PC-9 (cell line): ENCODE measurements at regions of chr6 and their contacts with region 1.

Region 1: DNA sequence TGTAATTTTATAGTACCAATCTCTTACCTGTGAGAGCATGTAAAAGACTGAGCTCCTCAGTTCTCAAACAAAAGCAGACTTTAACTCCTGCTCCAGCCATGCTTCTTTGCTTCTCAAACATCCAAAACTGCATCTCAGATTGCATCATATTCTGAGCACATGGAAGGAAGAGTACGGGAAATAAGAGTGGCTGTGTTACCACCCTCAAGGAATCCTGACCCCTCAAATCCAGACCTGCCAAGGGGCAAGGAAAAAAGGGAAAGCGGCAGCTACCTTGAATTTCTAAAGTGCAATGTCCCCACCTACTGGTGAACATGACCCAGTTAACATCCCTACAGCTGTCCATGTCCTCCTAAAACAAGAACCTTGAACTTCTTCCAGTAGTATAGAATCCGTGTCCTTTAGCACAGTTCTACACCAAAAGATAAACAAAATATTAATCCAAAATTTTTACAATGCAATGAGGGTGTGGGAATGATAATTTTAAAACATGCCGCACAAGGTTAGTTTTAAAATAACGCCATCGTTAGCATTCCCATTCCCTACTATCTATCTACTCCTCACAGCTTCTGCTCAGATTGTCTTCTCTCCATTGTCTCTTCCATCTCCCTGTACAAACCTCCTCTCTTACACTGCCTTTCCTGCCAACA is 34.1 kb upstream of the HLA-DQB1 start:
- DNase-seq: peak; percentile 32 to 50
- H3K4me3 ChIP-seq: no peak overlapping the region
- H3K27ac ChIP-seq: no peak overlapping the region
- H3K4me1 ChIP-seq: no peaks in the 10 kb centered on the region
- H3K27me3 ChIP-seq: 0 out of 2 replicates have a peak, but pooled peaks cover 8% of the 10 kb centered on the region
- CTCF ChIP-seq: peak; percentile 70

Region 2: DNA sequence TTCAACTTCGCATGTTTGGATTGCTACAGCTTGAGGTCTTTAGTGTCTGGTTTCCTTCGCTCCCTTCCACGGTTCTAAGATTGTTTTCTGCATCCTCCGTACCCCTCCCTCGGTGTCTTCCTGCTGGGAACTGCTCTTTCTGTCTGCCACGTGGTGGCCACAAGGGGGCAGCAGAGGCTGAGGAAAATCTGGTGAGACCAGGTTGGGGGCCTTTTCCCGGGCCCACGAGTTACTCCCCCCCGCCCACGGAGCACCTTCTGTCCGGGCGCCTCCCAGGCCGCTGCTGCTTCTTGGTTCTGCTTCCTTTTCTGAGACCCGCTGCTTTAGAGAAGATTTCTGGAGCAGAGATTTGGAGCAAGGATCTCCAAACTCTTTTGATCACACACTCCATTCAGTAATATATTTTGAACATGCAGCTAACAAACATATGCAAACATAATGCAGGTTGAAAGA is 455.5 kb before region 1 on chr6:
- CTCF ChIA-PET with region 1: no interaction called
- POLR2A ChIA-PET with region 1: no interaction called
- intact Hi-C with region 1: loop called (anchors 2 kb)
- DNase-seq: peak in 1 of 2 experiments; percentile 71
- H3K4me3 ChIP-seq: no peak overlapping the region
- H3K27ac ChIP-seq: no peak overlapping the region
- H3K4me1 ChIP-seq: no peaks in the 10 kb centered on the region
- H3K27me3 ChIP-seq: peaks cover 23% of the 10 kb centered on the region
- CTCF ChIP-seq: peak; percentile 95

Region 3: GRCh38 chr6:32413427-32414047 is 287.0 kb before region 1 on chr6:
- CTCF ChIA-PET with region 1: no interaction called
- POLR2A ChIA-PET with region 1: no interaction called
- intact Hi-C with region 1: loop called (anchors 2 kb)
- DNase-seq: peak; percentile 38 to 75
- H3K4me3 ChIP-seq: no peak overlapping the region
- H3K27ac ChIP-seq: no peak overlapping the region
- H3K4me1 ChIP-seq: no peaks in the 10 kb centered on the region
- H3K27me3 ChIP-seq: peaks cover 44% of the 10 kb centered on the region
- CTCF ChIP-seq: peak; percentile 88

Region 4: DNA sequence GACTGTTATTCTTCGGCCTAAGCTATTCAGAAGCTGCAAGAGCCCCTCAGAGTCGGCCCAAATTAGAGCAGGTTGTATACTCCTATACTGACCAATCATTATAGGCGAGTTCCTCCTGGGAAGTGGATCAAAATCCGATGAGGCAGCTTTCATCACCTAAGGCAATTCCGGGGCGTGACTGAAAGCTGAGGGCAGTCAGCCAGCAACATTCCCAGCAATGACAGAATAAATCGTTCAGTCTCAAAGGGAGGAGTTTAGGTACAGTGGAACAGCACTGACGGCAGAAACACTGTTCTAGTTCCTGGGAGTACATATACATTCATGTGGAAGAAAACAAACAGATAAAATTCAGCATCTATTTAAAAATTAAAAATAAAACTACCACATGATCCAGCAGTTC is 52.1 kb after region 1 on chr6:
- CTCF ChIA-PET with region 1: no interaction called
- POLR2A ChIA-PET with region 1: no interaction called
- intact Hi-C with region 1: no loop called
- DNase-seq: peak in 1 of 2 experiments; percentile 27
- H3K4me3 ChIP-seq: no peak overlapping the region
- H3K27ac ChIP-seq: no peak overlapping the region
- H3K4me1 ChIP-seq: no peaks in the 10 kb centered on the region
- H3K27me3 ChIP-seq: peaks cover 38% of the 10 kb centered on the region
- CTCF ChIP-seq: no peak

Region 5: DNA sequence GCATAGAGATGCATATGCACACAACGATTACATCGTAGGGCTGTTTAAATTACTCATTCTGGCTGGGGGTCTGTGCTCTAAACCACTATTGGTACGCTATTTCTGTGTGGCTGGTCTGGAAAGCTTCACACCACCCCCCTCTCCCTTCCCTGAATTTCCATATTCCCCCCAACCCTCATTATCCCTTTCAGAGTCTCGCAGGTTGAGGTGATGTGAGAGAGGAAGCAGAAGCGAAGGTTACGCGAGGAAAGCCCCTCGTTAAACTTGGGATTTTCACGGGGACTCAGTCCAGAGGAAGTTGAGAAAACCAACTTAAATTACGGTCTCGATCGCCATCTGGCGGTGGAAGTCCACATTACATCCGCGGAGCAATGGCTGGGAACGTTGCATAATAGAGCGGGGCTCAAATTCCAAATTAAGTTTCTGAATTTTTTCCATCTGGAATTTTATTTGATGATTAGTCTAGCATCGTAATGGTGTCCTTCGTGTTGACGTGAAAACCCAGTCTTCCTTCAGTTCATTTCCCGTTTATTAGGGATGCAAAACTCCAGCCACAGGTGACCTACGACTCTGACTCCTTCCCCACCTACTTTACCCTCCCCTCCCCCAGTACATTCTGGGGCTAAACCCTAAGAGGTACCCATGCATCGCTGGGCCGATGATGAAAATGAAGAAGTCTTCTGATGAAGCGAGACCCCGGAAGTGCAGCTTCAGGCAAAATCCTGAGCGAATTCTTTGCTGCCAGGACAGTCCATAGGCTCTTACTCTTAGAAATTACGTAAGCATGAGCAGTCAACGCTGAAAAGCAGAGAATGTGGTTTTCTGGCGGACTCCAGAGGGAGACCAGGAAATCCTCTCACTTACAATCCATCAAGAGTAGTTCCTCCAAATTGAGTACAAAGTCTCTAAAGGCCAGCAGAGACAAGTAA is 96.6 kb after region 1 on chr6:
- CTCF ChIA-PET with region 1: no interaction called
- POLR2A ChIA-PET with region 1: no interaction called
- intact Hi-C with region 1: loop called (anchors 10 kb)
- DNase-seq: peak; percentile 51 to 64
- H3K4me3 ChIP-seq: peak overlapping the region; percentile 30; the same call in 1 of the 2 replicates
- H3K27ac ChIP-seq: no peak overlapping the region
- H3K4me1 ChIP-seq: no peaks in the 10 kb centered on the region
- H3K27me3 ChIP-seq: peaks cover 35% of the 10 kb centered on the region
- CTCF ChIP-seq: peak; percentile 94

Region 6: DNA sequence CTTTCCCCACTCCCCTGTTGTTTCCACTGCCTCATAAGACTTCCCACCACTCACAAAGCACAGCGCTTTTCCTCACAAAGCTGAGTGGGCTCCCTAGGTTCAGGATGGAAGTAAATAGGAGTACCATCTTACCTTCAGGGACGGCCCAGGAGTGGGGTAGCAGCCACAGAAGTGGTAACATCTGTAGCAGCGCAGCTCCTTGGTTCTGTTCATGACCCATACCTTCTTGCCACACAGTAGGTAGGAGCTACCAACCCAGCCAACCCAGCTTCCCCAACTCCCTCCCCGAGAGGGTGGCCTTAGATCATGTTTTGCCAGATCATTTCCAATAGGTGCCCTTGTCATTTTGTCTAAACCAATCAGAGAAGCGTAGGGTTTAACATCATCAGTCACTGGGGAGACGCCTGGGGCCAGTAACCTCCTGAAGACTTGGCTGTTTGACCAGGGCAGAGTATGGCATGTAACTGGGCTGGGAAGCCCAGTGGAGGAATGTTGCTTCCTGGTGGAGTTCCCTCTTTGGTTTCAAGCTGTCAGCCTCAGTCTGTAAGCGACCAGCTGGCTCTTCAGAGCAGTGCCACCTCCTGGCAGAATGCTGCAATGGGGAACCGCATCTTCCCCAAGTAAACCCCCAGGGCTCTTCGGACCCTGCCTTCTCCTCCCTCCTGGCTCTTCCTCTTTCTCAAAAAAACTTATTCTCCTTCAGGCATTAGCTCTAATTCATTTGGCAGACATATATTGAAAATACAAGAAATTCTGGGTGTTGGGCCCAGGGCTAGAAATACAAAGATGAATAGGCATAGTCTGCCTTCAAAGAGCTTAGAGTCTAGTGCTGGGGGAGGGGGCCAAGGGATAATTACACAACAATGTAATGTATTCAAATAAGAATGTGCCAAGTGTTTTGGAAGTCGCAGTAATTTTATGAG is 252.6 kb after region 1 on chr6 and contains the start of gene HLA-DMA:
- CTCF ChIA-PET with region 1: no interaction called
- POLR2A ChIA-PET with region 1: no interaction called
- intact Hi-C with region 1: no loop called
- DNase-seq: peak; percentile 88 to 94
- H3K4me3 ChIP-seq: no peak within 1 kb of the TSS
- H3K27ac ChIP-seq: no peak within 1 kb of the TSS
- H3K4me1 ChIP-seq: peaks cover 4% of the 10 kb centered on the region
- H3K27me3 ChIP-seq: no peaks in the 10 kb centered on the region
- CTCF ChIP-seq: peak; percentile 81
- total RNA-seq, gene HLA-DMA: 18.3 and 22.1 TPM in 2 replicates